Naive thymus-derived CD4-positive, alpha-beta T cell (primary cell): ENCODE measurements at regions of chr13 and their contacts with region 1.

Region 1: GRCh38 chr13:91133941-91134802 is 213.3 kb upstream of the MIR17HG start:
- DNase-seq: peak in 5 of 9 donors; percentile 10 to 21 (median 20)
- ATAC-seq: peak; percentile 57
- H3K4me3 ChIP-seq: no peak overlapping the region
- H3K4me3 Mint-ChIP-seq: no peak overlapping the region
- H3K27ac ChIP-seq: no peak overlapping the region
- H3K27ac Mint-ChIP-seq: no peak overlapping the region
- H3K4me1 ChIP-seq: no peaks in the 10 kb centered on the region
- H3K4me1 Mint-ChIP-seq: peaks cover 0 to 4% (median 0%) of the 10 kb centered on the region in 7 donors
- H3K27me3 ChIP-seq: no peaks in the 10 kb centered on the region
- H3K27me3 Mint-ChIP-seq: peaks cover 0 to 5% (median 0%) of the 10 kb centered on the region in 5 donors

Region 2: GRCh38 chr13:89897681-89898080 is 1236.5 kb before region 1 on chr13:
- CTCF ChIA-PET with region 1: no interaction called
- POLR2A ChIA-PET with region 1: no interaction called
- intact Hi-C with region 1: no loop called
- DNase-seq: no peak
- ATAC-seq: no peak
- H3K4me3 ChIP-seq: no peak overlapping the region
- H3K4me3 Mint-ChIP-seq: no peak overlapping the region
- H3K27ac ChIP-seq: no peak overlapping the region
- H3K27ac Mint-ChIP-seq: no peak overlapping the region
- H3K4me1 ChIP-seq: no peaks in the 10 kb centered on the region
- H3K4me1 Mint-ChIP-seq: no peaks in the 10 kb centered on the region
- H3K27me3 ChIP-seq: no peaks in the 10 kb centered on the region
- H3K27me3 Mint-ChIP-seq: no peaks in the 10 kb centered on the region

Region 3: GRCh38 chr13:91247768-91248167 is 113.6 kb after region 1 on chr13:
- CTCF ChIA-PET with region 1: no interaction called
- POLR2A ChIA-PET with region 1: no interaction called
- intact Hi-C with region 1: loop called (anchors 1 to 5 kb)
- DNase-seq: no peak
- ATAC-seq: no peak
- H3K4me3 ChIP-seq: no peak overlapping the region
- H3K4me3 Mint-ChIP-seq: no peak overlapping the region
- H3K27ac ChIP-seq: no peak overlapping the region
- H3K27ac Mint-ChIP-seq: no peak overlapping the region
- H3K4me1 ChIP-seq: no peaks in the 10 kb centered on the region
- H3K4me1 Mint-ChIP-seq: no peaks in the 10 kb centered on the region
- H3K27me3 ChIP-seq: no peaks in the 10 kb centered on the region
- H3K27me3 Mint-ChIP-seq: peaks cover 0 to 37% (median 5%) of the 10 kb centered on the region in 5 donors

Region 4: GRCh38 chr13:91406619-91407018 is 272.4 kb after region 1 on chr13:
- CTCF ChIA-PET with region 1: no interaction called
- POLR2A ChIA-PET with region 1: no interaction called
- intact Hi-C with region 1: loop called in 1 of 2 experiments (anchors 1 kb)
- DNase-seq: peak in 1 of 9 donors; percentile 12
- ATAC-seq: no peak
- H3K4me3 ChIP-seq: no peak overlapping the region
- H3K4me3 Mint-ChIP-seq: no peak overlapping the region
- H3K27ac ChIP-seq: no peak overlapping the region
- H3K27ac Mint-ChIP-seq: peak overlapping the region in 1 of 9 donors; percentile 23
- H3K4me1 ChIP-seq: no peaks in the 10 kb centered on the region
- H3K4me1 Mint-ChIP-seq: peaks cover 0 to 2% (median 0%) of the 10 kb centered on the region in 7 donors
- H3K27me3 ChIP-seq: no peaks in the 10 kb centered on the region
- H3K27me3 Mint-ChIP-seq: peaks cover 8 to 59% (median 12%) of the 10 kb centered on the region in 5 donors

Region 5: DNA sequence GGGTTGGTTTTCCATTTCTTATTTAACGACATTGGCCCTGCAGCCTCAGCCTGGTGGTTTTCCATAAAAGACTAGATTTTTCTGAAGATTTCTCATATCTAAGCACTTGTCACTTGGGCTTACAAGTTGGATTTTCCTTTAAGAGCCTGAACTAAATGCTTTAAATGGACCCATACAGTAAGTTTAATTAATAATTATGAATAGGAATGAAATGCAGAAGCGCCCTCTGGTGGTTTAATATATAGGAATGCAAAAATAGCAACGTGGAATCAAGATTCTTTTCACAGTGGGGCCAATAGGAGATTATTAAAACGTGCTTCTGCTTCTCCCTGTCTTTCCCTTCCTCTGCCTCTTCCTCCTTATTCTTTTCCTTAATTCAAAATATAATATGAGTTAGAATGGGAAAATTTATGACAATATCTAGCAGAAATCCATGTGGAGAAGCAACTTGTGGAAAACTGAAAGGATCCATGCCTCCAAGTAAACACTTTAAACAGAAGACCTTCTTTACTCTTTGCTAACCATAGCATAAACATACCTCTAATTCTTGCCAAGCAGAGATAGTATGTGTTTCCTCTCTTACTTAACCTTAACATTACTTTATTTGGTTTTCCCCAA is 588.2 kb after region 1 on chr13:
- CTCF ChIA-PET with region 1: no interaction called
- POLR2A ChIA-PET with region 1: no interaction called
- intact Hi-C with region 1: loop called in 1 of 2 experiments (anchors 2 kb)
- DNase-seq: peak in 5 of 9 donors; percentile 1 to 26 (median 10)
- ATAC-seq: no peak
- H3K4me3 ChIP-seq: no peak overlapping the region
- H3K4me3 Mint-ChIP-seq: no peak overlapping the region
- H3K27ac ChIP-seq: no peak overlapping the region
- H3K27ac Mint-ChIP-seq: no peak overlapping the region
- H3K4me1 ChIP-seq: no peaks in the 10 kb centered on the region
- H3K4me1 Mint-ChIP-seq: peaks cover 0 to 2% (median 0%) of the 10 kb centered on the region in 7 donors
- H3K27me3 ChIP-seq: no peaks in the 10 kb centered on the region
- H3K27me3 Mint-ChIP-seq: peaks cover 0 to 11% (median 2%) of the 10 kb centered on the region in 5 donors

Region 6: DNA sequence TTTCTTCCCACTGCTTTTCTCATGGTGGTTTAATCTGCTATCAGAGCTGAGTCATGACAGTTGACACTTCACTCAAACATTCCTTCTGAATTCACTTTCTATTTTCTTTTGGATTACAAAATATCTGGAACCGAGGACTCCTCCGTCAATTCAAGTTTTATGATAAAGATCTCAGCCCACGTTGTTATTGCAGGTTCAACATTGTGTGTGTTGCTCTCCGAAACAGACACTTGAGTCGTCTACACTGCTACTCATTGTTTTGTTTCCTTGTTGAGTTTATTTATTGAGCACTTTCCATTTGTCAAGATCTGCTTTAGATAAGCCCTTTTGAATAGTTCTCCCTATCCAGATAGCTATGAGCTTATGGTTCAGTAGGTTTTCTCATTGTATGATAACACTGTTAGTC is 1456.3 kb after region 1 on chr13:
- CTCF ChIA-PET with region 1: no interaction called
- POLR2A ChIA-PET with region 1: no interaction called
- intact Hi-C with region 1: no loop called
- DNase-seq: no peak
- ATAC-seq: no peak
- H3K4me3 ChIP-seq: no peak overlapping the region
- H3K4me3 Mint-ChIP-seq: no peak overlapping the region
- H3K27ac ChIP-seq: no peak overlapping the region
- H3K27ac Mint-ChIP-seq: no peak overlapping the region
- H3K4me1 ChIP-seq: no peaks in the 10 kb centered on the region
- H3K4me1 Mint-ChIP-seq: no peaks in the 10 kb centered on the region
- H3K27me3 ChIP-seq: no peaks in the 10 kb centered on the region
- H3K27me3 Mint-ChIP-seq: no peaks in the 10 kb centered on the region